ENCODE measurements at regions of chr14 and their contacts with region 1.

Region 1: GRCh38 chr14:87944987-87945604 is 47.9 kb downstream of the GALC start:
- DNase-seq: peak in 2 of 9 experiments; percentile 74 to 79
- ATAC-seq: peak; percentile 69
- H3K4me3 ChIP-seq: no peak overlapping the region
- H3K4me3 Mint-ChIP-seq: no peak overlapping the region
- H3K27ac ChIP-seq: no peak overlapping the region
- H3K27ac Mint-ChIP-seq: no peak overlapping the region
- H3K4me1 ChIP-seq: peaks cover 4% of the 10 kb centered on the region
- H3K4me1 Mint-ChIP-seq: peaks cover 16% of the 10 kb centered on the region
- H3K27me3 ChIP-seq: no peaks in the 10 kb centered on the region
- H3K27me3 Mint-ChIP-seq: no peaks in the 10 kb centered on the region
- CTCF ChIP-seq: peak; percentile 90

Region 2: DNA sequence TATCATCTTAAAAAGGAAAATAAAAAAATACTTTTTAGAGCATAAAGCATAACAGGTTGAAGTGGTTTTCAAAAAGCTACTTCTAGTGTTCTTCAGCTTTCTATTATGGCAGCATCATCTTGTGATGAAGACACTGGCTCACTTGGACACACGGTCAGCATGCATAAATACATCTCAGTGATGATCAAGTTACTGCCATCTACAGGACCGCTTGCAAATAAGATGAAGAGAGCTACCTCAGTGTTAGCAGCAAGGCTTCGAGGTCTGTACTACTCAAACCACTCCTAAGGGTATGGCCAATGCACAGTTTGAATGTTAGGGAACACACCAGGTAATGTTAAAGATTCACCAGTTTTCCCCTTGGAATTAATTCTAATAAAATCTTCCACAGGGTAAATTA is 10.9 kb before region 1 on chr14:
- CTCF ChIA-PET with region 1: interaction called, 19 read pairs
- POLR2A ChIA-PET with region 1: no interaction called
- intact Hi-C with region 1: no loop called
- DNase-seq: no peak
- ATAC-seq: no peak
- H3K4me3 ChIP-seq: no peak overlapping the region
- H3K4me3 Mint-ChIP-seq: no peak overlapping the region
- H3K27ac ChIP-seq: no peak overlapping the region
- H3K27ac Mint-ChIP-seq: no peak overlapping the region
- H3K4me1 ChIP-seq: no peaks in the 10 kb centered on the region
- H3K4me1 Mint-ChIP-seq: peaks cover 5% of the 10 kb centered on the region
- H3K27me3 ChIP-seq: no peaks in the 10 kb centered on the region
- H3K27me3 Mint-ChIP-seq: no peaks in the 10 kb centered on the region
- CTCF ChIP-seq: no peak

Region 3: GRCh38 chr14:88013750-88014349 is 68.8 kb after region 1 on chr14:
- CTCF ChIA-PET with region 1: interaction called, 21 read pairs
- POLR2A ChIA-PET with region 1: no interaction called
- intact Hi-C with region 1: no loop called
- DNase-seq: peak in 6 of 9 experiments; percentile 35 to 72 (median 50)
- ATAC-seq: peak; percentile 78
- H3K4me3 ChIP-seq: no peak overlapping the region
- H3K4me3 Mint-ChIP-seq: peak overlapping the region; percentile 6
- H3K27ac ChIP-seq: no peak overlapping the region
- H3K27ac Mint-ChIP-seq: peak overlapping the region; percentile 80
- H3K4me1 ChIP-seq: peaks cover 50% of the 10 kb centered on the region
- H3K4me1 Mint-ChIP-seq: peaks cover 81% of the 10 kb centered on the region
- H3K27me3 ChIP-seq: no peaks in the 10 kb centered on the region
- H3K27me3 Mint-ChIP-seq: no peaks in the 10 kb centered on the region
- CTCF ChIP-seq: peak; percentile 51

Region 4: GRCh38 chr14:88156127-88156526 is 211.0 kb after region 1 on chr14:
- CTCF ChIA-PET with region 1: interaction called, 50 read pairs
- POLR2A ChIA-PET with region 1: no interaction called
- intact Hi-C with region 1: no loop called
- DNase-seq: no peak
- ATAC-seq: no peak
- H3K4me3 ChIP-seq: no peak overlapping the region
- H3K4me3 Mint-ChIP-seq: no peak overlapping the region
- H3K27ac ChIP-seq: no peak overlapping the region
- H3K27ac Mint-ChIP-seq: no peak overlapping the region
- H3K4me1 ChIP-seq: no peaks in the 10 kb centered on the region
- H3K4me1 Mint-ChIP-seq: no peaks in the 10 kb centered on the region
- H3K27me3 ChIP-seq: no peaks in the 10 kb centered on the region
- H3K27me3 Mint-ChIP-seq: peaks cover 7% of the 10 kb centered on the region
- CTCF ChIP-seq: no peak

Region 5: DNA sequence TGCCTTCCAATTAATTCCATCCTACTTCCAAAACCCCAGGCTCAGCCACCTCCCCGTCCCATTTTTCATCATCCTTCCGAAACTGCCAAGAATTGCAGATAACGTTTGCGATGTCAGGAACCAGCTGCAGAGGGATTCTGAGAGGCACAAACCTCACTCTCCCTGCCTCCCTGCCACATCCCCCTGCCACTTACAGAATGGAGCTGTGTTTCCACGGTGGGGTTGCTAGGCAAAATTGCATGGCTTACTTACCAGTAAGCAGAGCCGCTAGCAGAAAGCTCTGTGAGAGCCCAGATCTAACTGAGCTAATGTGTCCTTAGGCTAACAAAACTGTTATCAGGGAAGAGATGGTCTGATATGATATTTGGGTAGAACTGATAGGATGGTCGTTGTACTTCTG is 250.6 kb after region 1 on chr14:
- CTCF ChIA-PET with region 1: interaction called, 23 read pairs
- POLR2A ChIA-PET with region 1: no interaction called
- intact Hi-C with region 1: no loop called
- DNase-seq: no peak
- ATAC-seq: no peak
- H3K4me3 ChIP-seq: no peak overlapping the region
- H3K4me3 Mint-ChIP-seq: no peak overlapping the region
- H3K27ac ChIP-seq: no peak overlapping the region
- H3K27ac Mint-ChIP-seq: no peak overlapping the region
- H3K4me1 ChIP-seq: no peaks in the 10 kb centered on the region
- H3K4me1 Mint-ChIP-seq: no peaks in the 10 kb centered on the region
- H3K27me3 ChIP-seq: no peaks in the 10 kb centered on the region
- H3K27me3 Mint-ChIP-seq: peaks cover 26% of the 10 kb centered on the region
- CTCF ChIP-seq: no peak

Region 6: DNA sequence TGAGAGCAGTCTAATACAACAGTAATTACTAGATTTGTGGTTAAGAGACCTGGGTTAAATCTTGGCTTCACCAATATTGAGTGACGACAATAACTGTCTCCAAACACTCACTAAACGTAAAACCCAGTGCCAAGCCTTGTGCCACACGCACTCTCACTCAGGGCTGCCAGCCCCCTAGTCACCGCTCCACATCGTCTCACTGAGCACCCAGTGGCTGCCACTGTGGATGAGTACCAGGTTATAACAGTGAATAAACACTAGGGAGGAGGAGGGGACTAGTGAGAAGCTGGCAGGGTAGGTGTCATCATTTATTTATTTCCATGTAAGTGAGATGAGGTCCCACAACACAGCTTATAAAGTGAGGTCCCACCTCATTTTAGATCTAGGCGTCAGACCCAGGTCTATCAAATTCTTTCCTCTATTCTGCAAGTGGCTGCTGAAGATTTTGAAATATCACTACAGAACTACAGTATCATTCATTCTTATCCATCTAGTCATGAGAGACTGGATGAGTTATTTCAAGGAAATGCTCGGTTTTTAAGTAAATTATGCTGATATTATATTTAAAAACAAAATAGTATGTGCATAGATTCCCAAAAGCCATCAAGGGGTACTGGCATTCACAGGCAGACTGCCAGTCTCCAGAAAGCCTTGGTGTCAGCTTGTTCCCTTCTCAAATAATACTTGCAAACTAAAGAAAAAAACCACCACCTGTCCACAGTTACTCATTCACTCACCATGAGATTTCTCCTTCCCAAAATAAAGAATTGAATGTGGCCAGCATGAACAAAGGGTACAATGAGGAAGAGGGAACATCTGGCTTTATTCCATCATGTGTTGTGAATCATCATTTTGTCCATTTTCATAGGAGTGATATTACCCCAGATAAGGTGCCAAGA is 525.7 kb after region 1 on chr14:
- CTCF ChIA-PET with region 1: no interaction called
- POLR2A ChIA-PET with region 1: no interaction called
- intact Hi-C with region 1: loop called in 1 of 2 experiments (anchors 10 kb)
- DNase-seq: no peak
- ATAC-seq: no peak
- H3K4me3 ChIP-seq: no peak overlapping the region
- H3K4me3 Mint-ChIP-seq: no peak overlapping the region
- H3K27ac ChIP-seq: no peak overlapping the region
- H3K27ac Mint-ChIP-seq: no peak overlapping the region
- H3K4me1 ChIP-seq: no peaks in the 10 kb centered on the region
- H3K4me1 Mint-ChIP-seq: no peaks in the 10 kb centered on the region
- H3K27me3 ChIP-seq: no peaks in the 10 kb centered on the region
- H3K27me3 Mint-ChIP-seq: no peaks in the 10 kb centered on the region
- CTCF ChIP-seq: no peak

Measured in CD8-positive, alpha-beta T cell (primary cell).